ENCODE measurements at regions of chr7 and their contacts with region 1.

Region 1: DNA sequence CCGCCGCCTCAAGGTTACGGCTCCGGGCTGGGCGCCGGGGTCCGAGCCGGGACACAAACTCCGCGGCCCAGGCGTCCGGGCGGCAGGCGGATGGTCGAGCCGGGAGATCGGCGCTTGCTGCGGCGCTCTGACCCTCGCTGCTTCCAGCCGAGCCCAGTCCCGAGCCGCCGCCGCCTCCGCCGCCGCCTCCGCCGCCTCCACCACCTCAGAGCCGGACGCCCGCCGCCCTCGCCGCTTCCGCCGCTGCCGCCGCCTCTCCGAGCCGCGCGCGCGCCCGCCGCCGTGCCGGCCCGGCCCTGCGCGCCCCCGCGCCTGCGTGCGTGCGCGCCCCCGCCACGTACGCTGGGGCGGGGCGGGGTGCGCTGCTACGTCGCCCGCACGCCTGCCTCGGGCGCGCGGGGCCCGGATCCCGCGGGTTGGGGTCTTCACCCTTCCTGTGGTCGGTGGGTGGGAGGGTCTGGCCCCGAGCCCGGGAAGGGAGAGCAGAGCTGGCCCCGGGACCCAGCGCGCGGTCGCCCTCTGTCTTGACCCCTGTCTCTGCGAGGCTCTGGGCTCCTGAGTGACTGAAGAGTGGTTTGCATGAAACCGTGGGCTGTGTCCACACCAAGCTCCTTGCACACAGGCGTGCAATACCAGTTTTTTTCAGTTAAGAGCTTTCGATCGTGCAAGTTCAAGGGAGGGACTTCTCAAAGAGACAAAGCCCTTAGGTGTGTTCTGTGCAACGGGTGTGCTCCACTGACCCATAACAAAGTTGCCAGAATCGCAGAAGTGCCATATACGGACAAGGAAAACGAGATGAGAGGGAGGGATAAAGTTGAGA is at the start of gene SMURF1:
- DNase-seq: peak; percentile 62 to 78
- ATAC-seq: peak; percentile 46 to 84 (median 72)
- H3K4me3 ChIP-seq: peak within 1 kb of the TSS; percentile 69 to 100 (median 97)
- H3K27ac ChIP-seq: peak within 1 kb of the TSS; percentile 96 to 100 (median 97)
- H3K4me1 ChIP-seq: peaks cover 0 to 43% (median 27%) of the 10 kb centered on the region in 9 donors
- H3K27me3 ChIP-seq: no peaks in the 10 kb centered on the region
- CTCF ChIP-seq: peak in 3 of 9 donors; percentile 25 to 39 (median 34)
- total RNA-seq, gene SMURF1: 8.4 to 14.7 (median 11.5) TPM

Region 2: DNA sequence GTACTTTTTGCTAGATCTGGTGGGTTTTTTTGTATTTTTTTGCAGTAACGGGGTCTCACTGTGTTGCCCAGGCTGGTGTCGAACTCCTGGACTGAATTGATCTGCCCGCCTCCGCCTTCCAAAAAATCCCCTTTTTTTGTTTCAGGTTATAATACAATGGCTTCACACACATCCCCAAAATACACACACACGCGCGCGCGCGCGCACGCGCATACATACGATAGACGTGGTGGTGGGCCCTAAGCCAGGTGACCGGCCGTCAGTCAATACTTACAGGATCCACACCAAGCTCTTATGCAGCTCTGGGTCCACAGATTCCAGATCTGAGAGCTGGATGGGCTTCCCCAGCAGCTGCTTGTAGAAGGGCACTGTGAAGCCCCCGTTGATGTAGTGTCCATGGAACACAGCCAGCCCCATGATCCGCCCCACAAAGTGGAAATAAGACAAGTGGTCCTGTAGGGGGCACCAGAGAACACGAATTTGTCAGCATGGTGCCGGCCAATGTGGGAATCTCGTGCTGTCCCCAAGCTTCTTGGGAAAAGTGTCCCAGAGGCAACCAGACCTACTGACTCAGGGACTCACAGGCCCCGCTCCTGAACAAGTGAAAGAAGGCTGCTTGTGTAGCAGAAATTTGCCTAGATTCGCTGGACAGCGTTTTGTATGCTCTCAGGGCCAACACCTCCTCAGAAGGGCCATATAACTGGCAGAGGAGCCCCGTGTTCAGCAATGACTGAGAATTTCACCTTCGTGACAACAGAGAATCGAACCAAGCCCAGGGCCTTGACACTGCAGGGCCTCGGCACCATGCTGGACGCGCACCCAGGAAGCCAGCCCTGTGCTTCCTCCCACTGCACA is 103.7 kb before region 1 on chr7:
- intact Hi-C with region 1: loop called in 8 of 10 experiments (anchors 5 to 10 kb)
- DNase-seq: peak; percentile 64 to 91
- ATAC-seq: peak; percentile 76 to 91 (median 85)
- H3K4me3 ChIP-seq: no peak overlapping the region
- H3K27ac ChIP-seq: peak overlapping the region in 6 of 10 donors; percentile 27 to 67 (median 49)
- H3K4me1 ChIP-seq: peaks cover 0 to 42% (median 9%) of the 10 kb centered on the region in 9 donors
- H3K27me3 ChIP-seq: no peaks in the 10 kb centered on the region
- CTCF ChIP-seq: peak; percentile 61 to 85 (median 77)

Region 3: DNA sequence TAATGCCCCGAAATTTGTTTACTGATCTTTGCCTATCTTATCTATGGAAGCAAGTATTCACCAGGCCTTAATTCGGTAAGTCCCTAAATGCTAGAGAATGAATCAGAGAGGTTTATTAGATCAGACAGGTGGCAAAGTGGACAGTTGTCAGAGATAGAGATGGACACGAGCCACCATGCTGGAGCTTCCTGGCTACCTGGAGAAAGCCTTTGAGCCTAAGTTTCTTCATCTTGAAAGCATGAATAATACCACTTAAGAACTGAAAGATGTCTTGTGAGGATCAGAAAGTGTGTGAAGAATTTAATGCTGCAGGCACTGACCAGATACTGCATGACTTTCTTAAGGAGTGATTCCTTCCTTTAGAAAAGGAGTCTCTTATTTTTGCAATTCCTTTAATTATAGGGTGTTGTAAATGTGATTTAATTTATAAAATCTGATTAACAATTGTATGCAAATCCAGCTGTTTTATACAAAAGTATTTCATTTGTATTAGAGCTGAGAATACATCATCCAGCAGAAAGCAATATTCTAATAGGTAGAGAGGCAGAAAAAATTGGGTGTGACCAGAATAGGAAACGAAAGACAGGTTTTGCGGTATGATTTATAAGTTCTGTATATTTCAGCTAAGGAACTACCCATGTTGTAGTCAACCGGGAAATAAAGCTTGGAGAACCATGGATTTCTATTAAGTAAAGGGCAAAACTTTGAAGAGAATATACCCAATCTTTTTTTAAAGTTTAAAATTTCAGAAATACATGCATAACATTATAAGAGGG is 82.9 kb before region 1 on chr7:
- intact Hi-C with region 1: loop called in 2 of 10 experiments (anchors 5 to 10 kb)
- DNase-seq: no peak
- ATAC-seq: no peak
- H3K4me3 ChIP-seq: no peak overlapping the region
- H3K27ac ChIP-seq: no peak overlapping the region
- H3K4me1 ChIP-seq: no peaks in the 10 kb centered on the region
- H3K27me3 ChIP-seq: no peaks in the 10 kb centered on the region
- CTCF ChIP-seq: no peak

Region 4: GRCh38 chr7:99098824-99099498 is 45.1 kb before region 1 on chr7:
- intact Hi-C with region 1: loop called in 2 of 10 experiments (anchors 5 kb)
- DNase-seq: no peak
- ATAC-seq: peak in 7 of 8 donors; percentile 18 to 45 (median 27)
- H3K4me3 ChIP-seq: no peak overlapping the region
- H3K27ac ChIP-seq: peak overlapping the region in 6 of 10 donors; percentile 6 to 42 (median 30)
- H3K4me1 ChIP-seq: peaks cover 0 to 42% (median 19%) of the 10 kb centered on the region in 9 donors
- H3K27me3 ChIP-seq: no peaks in the 10 kb centered on the region
- CTCF ChIP-seq: no peak

Region 5: DNA sequence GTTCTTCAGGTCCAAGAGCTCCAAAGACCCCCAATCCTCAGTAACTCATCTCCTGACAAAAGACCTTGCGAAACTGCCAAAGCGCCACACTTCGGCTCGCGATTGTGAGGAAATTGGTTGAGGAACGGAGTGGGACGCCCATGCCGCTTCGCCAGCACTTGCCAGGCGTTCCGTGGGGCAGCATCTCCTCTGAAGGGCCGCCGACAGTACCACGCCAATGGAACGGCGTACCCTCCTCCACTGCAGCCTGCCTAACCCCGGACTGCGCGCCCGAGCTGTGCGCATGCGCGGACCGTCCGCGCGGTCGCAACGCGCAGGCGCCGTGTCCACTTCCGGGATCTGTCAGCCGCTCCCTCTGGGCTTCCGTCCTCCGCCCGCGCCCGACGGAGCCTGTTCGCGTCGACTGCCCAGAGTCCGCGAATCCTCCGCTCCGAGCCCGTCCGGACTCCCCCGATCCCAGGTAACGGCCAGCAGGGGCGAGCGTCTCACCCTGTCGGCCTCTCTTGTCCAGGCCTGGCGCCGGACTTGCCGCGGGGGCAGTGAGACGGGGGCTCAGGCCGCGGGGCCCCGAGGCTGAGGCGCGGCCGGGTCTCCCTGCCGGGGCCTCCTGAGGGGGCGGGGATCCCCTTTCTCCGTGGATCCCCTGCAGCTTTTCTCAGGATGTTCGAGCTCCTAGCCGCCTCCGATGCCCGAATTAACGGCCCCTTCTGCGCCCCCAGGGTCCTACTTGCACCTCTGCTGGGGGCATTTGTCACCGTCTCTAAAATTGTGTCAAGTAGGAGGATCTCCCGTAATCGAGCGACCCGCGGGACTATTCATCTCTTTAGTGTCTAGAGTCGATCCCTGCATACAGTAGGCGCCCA is 181.7 kb after region 1 on chr7 and contains the start of gene ARPC1A:
- intact Hi-C with region 1: loop called in 1 of 10 experiments (anchors 1 kb)
- DNase-seq: peak; percentile 90 to 94
- ATAC-seq: peak; percentile 95 to 97 (median 96)
- H3K4me3 ChIP-seq: peak within 1 kb of the TSS; percentile 75 to 100 (median 90)
- H3K27ac ChIP-seq: peak within 1 kb of the TSS; percentile 73 to 98 (median 93)
- H3K4me1 ChIP-seq: peaks cover 7 to 65% (median 51%) of the 10 kb centered on the region in 9 donors
- H3K27me3 ChIP-seq: no peaks in the 10 kb centered on the region
- CTCF ChIP-seq: peak in 5 of 9 donors; percentile 11 to 38 (median 16)
- total RNA-seq, gene ARPC1A: 110 to 147 (median 134) TPM